ENCODE measurements at regions of chr16 and their contacts with region 1.

Region 1: DNA sequence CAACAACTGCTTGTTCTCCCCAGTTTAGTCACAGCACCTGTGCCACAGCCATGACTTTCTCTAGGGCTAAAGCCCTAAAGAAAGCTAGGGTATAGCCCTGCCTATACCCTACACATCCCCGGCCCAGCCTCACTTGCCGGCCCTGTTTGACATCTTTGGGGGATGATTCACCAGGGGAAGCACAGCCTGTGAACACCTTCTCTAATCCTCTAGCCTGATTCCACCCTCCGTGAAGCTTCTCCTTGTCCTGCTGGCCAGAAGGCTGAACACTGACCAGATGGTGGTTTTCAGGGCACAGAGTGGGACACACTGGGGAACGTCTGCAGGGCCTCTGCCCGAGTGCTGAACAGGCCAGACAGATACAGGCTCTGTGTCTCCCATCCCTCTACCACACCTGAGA is 6.0 kb downstream of the CLEC16A start:
- DNase-seq: peak; percentile 67
- ATAC-seq: peak; percentile 80
- H3K4me3 ChIP-seq: no peak overlapping the region
- H3K27ac ChIP-seq: peak overlapping the region; percentile 18; the same call in 1 of the 2 replicates
- H3K4me1 ChIP-seq: peaks cover 27% of the 10 kb centered on the region
- H3K27me3 ChIP-seq: no peaks in the 10 kb centered on the region
- CTCF ChIP-seq: no peak

Region 2: DNA sequence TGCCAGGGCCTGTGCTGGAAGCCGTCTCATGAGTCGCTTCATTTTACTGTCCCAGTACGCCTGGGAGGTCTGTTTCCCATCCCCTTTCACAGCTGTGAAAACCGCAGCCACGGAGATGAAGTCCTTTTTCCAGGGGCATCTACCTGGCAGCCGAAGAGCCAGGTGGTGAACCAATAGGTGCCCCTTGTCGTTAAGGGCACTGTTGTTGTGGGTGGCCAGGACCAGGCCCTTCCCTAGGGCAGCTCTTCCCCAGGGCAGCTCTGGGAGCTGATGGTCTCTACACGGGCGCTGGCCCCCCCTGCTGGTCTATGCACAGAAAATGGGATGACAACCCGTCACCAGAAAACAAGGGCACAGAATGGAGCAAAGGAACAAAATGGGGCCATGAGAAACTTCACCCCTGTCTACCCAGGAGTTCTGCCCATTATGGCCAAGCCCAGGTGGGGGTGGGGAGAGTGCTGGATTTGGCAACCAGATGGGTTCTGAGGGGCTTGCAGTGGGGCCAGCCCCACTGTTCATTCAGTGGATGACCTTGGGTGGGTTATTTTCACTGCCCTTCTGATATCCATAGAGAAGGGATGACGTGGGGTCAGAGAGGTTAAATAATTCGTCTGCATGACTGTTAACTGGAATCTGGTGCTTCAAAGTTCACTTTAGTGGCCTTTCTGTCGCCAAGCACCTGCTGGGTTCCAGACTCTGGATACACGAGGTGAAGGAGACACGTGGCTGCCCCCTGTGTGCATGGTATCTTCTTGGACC is 406.4 kb after region 1 on chr16:
- CTCF ChIA-PET with region 1: no interaction called
- POLR2A ChIA-PET with region 1: no interaction called
- intact Hi-C with region 1: loop called (anchors 5 kb)
- DNase-seq: no peak
- ATAC-seq: no peak
- H3K4me3 ChIP-seq: peak overlapping the region; percentile 13; the same call in 1 of the 2 replicates
- H3K27ac ChIP-seq: peak overlapping the region; percentile 96
- H3K4me1 ChIP-seq: peaks cover 41% of the 10 kb centered on the region
- H3K27me3 ChIP-seq: no peaks in the 10 kb centered on the region
- CTCF ChIP-seq: peak; percentile 64